ENCODE measurements at regions of chr6 and their contacts with region 1.

Region 1: DNA sequence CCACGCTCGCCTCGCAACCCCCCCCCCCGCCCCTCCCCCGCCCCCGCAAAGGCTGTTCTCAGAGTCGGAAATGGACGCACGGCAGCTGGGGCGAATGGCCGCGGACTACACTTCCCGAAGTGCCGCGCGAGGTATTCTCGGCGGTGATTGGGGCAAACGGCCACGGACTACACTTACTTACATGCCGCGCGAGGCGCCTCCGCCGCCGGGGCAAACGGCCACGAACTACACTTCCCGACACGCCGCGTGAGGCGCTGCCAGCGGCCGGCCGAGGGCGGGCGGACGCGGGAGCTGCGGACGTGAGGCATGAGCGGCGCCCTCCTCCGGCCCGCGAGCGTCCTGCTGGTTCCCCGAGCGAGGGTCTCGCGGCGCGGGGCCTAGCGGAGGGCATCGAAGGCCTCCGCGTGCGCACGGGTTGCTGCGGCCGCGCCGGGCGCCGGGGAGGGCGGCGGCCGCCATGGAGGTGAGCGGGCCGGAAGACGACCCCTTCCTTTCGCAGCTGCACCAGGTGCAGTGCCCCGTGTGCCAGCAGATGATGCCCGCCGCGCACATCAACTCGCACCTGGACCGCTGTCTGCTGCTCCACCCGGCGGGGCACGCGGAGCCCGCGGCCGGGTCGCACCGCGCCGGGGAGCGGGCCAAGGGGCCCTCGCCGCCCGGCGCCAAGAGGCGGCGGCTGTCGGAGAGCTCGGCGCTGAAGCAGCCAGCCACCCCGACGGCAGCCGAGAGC is at the start of gene WRNIP1:
- DNase-seq: peak; percentile 89 to 97 (median 97)
- ATAC-seq: peak; percentile 90
- H3K4me3 ChIP-seq: peak within 1 kb of the TSS; percentile 76
- H3K4me3 Mint-ChIP-seq: peak within 1 kb of the TSS; percentile 86 to 96 (median 94)
- H3K27ac ChIP-seq: peak within 1 kb of the TSS; percentile 88
- H3K27ac Mint-ChIP-seq: peak within 1 kb of the TSS; percentile 89 to 100 (median 99)
- H3K4me1 ChIP-seq: peaks cover 30 to 31% of the 10 kb centered on the region in 2 donors
- H3K4me1 Mint-ChIP-seq: peaks cover 27 to 54% (median 50%) of the 10 kb centered on the region in 7 donors
- H3K27me3 ChIP-seq: no peaks in the 10 kb centered on the region
- H3K27me3 Mint-ChIP-seq: no peaks in the 10 kb centered on the region
- total RNA-seq, gene WRNIP1: 31.2 to 47.6 (median 37.8) TPM

Region 2: DNA sequence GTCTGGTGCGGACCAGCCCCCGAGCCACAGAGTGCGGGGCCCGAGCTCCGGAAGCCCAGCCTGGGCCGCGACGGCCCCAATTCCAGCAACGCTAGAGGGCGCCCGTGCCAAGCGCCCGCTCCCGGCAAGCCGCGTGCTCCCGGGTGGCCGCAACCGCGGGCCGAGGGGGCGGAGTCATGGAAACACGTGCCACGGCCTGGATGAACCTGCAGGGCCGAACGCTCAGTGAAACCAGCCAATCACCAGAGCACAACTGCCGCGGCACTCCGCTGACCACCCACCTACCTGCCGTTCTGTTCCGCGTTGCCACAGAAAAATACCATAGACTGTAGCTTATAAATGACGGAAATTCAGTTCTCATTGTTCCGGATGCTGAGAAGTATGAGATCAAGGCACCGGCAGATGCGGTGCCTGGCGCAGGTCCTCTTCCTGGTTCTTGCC is 1241.3 kb before region 1 on chr6:
- CTCF ChIA-PET with region 1: no interaction called
- POLR2A ChIA-PET with region 1: no interaction called
- intact Hi-C with region 1: loop called in 1 of 2 experiments (anchors 10 kb)
- DNase-seq: peak; percentile 58 to 82 (median 75)
- ATAC-seq: peak; percentile 89
- H3K4me3 ChIP-seq: peak overlapping the region; percentile 60
- H3K4me3 Mint-ChIP-seq: peak overlapping the region; percentile 64 to 87 (median 79)
- H3K27ac ChIP-seq: no peak overlapping the region
- H3K27ac Mint-ChIP-seq: peak overlapping the region; percentile 51 to 93 (median 90)
- H3K4me1 ChIP-seq: peaks cover 19 to 50% of the 10 kb centered on the region in 2 donors
- H3K4me1 Mint-ChIP-seq: peaks cover 35 to 58% (median 48%) of the 10 kb centered on the region in 7 donors
- H3K27me3 ChIP-seq: no peaks in the 10 kb centered on the region
- H3K27me3 Mint-ChIP-seq: peaks cover 0 to 16% (median 4%) of the 10 kb centered on the region in 5 donors

Region 3: DNA sequence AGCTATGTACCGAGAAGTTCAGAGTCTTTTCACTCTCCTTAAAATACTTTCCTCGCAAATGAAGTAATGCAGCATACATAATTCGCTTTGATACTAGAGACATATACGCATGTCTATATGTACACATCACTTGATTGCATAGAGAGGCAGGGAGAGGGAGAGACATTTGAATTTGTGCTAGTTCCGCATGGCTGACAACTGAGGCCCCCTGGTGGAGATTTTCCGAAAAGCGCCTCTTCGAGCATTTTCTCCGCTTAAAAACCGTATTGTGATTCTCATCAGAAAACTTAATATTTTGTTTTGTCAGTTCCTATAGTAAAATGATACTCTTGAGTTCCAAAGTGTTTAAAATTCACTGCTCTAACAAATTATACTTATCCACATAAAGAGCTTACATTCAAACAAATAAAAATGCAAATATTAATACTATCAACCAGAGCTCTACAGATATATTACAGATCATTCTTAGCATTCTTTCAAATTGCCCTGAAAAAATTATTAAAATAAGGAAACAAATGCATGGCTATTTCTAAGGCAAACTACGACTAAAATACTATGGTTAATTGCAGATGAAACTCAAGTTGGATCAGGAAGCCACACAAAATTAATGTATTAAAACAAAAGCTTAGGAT is 15.2 kb before region 1 on chr6:
- CTCF ChIA-PET with region 1: interaction called, 8 read pairs
- POLR2A ChIA-PET with region 1: interaction called, 4 read pairs
- intact Hi-C with region 1: loop called in 1 of 2 experiments (anchors 1 kb)
- DNase-seq: peak; percentile 32 to 71 (median 63)
- ATAC-seq: peak; percentile 86
- H3K4me3 ChIP-seq: no peak overlapping the region
- H3K4me3 Mint-ChIP-seq: no peak overlapping the region
- H3K27ac ChIP-seq: no peak overlapping the region
- H3K27ac Mint-ChIP-seq: no peak overlapping the region
- H3K4me1 ChIP-seq: no peaks in the 10 kb centered on the region
- H3K4me1 Mint-ChIP-seq: peaks cover 0 to 9% (median 3%) of the 10 kb centered on the region in 7 donors
- H3K27me3 ChIP-seq: no peaks in the 10 kb centered on the region
- H3K27me3 Mint-ChIP-seq: peaks cover 13 to 69% (median 19%) of the 10 kb centered on the region in 5 donors

Region 4: GRCh38 chr6:2841264-2842138 is 76.2 kb after region 1 on chr6 and contains the start of gene SERPINB1:
- CTCF ChIA-PET with region 1: no interaction called
- POLR2A ChIA-PET with region 1: interaction called, 21 read pairs
- intact Hi-C with region 1: loop called (anchors 1 to 2 kb)
- DNase-seq: peak; percentile 52 to 88 (median 67)
- ATAC-seq: peak; percentile 89
- H3K4me3 ChIP-seq: peak within 1 kb of the TSS; percentile 69
- H3K4me3 Mint-ChIP-seq: peak within 1 kb of the TSS; percentile 86 to 100 (median 92)
- H3K27ac ChIP-seq: peak within 1 kb of the TSS; percentile 85
- H3K27ac Mint-ChIP-seq: peak within 1 kb of the TSS; percentile 86 to 96 (median 95)
- H3K4me1 ChIP-seq: peaks cover 16 to 29% of the 10 kb centered on the region in 2 donors
- H3K4me1 Mint-ChIP-seq: peaks cover 33 to 68% (median 60%) of the 10 kb centered on the region in 7 donors
- H3K27me3 ChIP-seq: no peaks in the 10 kb centered on the region
- H3K27me3 Mint-ChIP-seq: no peaks in the 10 kb centered on the region
- total RNA-seq, gene SERPINB1: 43.8 to 108 (median 62.5) TPM

Region 5: GRCh38 chr6:2999618-3000557 is 234.6 kb after region 1 on chr6 and contains the start of gene NQO2:
- CTCF ChIA-PET with region 1: no interaction called
- POLR2A ChIA-PET with region 1: no interaction called
- intact Hi-C with region 1: loop called in 1 of 2 experiments (anchors 1 kb)
- DNase-seq: peak; percentile 68 to 92 (median 81)
- ATAC-seq: peak; percentile 91
- H3K4me3 ChIP-seq: peak within 1 kb of the TSS; percentile 95
- H3K4me3 Mint-ChIP-seq: peak within 1 kb of the TSS; percentile 83 to 95 (median 90)
- H3K27ac ChIP-seq: peak within 1 kb of the TSS; percentile 88
- H3K27ac Mint-ChIP-seq: peak within 1 kb of the TSS; percentile 78 to 96 (median 88)
- H3K4me1 ChIP-seq: peaks cover 5 to 18% of the 10 kb centered on the region in 2 donors
- H3K4me1 Mint-ChIP-seq: peaks cover 11 to 35% (median 26%) of the 10 kb centered on the region in 7 donors
- H3K27me3 ChIP-seq: no peaks in the 10 kb centered on the region
- H3K27me3 Mint-ChIP-seq: peaks cover 0 to 5% (median 0%) of the 10 kb centered on the region in 5 donors
- total RNA-seq, gene NQO2: 8.1 to 34.6 (median 22.6) TPM

Region 6: GRCh38 chr6:3162565-3163247 is 397.4 kb after region 1 on chr6:
- CTCF ChIA-PET with region 1: no interaction called
- POLR2A ChIA-PET with region 1: no interaction called
- intact Hi-C with region 1: loop called in 1 of 2 experiments (anchors 1 kb)
- DNase-seq: peak; percentile 29 to 62 (median 51)
- ATAC-seq: peak; percentile 63
- H3K4me3 ChIP-seq: peak overlapping the region; percentile 73
- H3K4me3 Mint-ChIP-seq: peak overlapping the region; percentile 78 to 87 (median 84)
- H3K27ac ChIP-seq: peak overlapping the region; percentile 70
- H3K27ac Mint-ChIP-seq: peak overlapping the region in 8 of 9 donors; percentile 37 to 92 (median 64)
- H3K4me1 ChIP-seq: peaks cover 19 to 22% of the 10 kb centered on the region in 2 donors
- H3K4me1 Mint-ChIP-seq: peaks cover 0 to 40% (median 36%) of the 10 kb centered on the region in 7 donors
- H3K27me3 ChIP-seq: no peaks in the 10 kb centered on the region
- H3K27me3 Mint-ChIP-seq: peaks cover 0 to 68% (median 6%) of the 10 kb centered on the region in 5 donors

Region 7: DNA sequence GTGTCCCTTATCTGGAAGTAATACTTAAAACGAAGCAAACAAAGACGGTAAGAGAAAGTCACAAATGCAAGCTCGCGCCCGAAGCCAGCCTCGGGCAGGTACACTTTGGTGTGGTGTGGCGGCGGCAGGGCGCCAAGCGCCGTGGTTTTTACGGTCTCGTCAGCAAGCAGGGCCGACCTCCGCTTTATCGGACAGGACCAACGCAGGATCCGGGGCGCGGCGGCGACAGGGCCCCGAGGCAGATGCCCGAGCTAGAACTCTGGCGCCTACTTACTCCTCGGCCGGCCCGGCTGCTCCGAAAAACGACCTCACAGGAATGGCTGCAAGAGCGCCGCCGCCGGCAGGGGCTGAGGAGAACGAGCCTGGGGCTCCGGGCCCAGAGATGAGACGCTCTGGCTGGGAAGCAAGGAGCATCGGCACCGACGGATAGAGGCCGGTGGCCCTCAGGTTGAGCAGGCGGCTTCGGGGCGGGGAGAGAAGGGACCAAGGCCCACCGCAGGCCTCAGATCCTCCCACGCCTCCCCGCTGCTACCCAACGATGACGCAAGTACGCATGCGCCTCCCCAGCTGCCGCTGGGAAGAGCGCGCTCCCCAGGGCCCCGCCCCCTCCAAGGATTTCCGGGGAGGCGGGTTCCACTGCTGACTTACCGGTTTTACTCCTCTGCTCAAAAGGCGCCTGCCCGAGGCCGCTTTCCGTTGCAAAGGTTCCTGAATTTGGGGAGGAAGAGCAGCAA is 1253.0 kb after region 1 on chr6:
- CTCF ChIA-PET with region 1: no interaction called
- POLR2A ChIA-PET with region 1: no interaction called
- intact Hi-C with region 1: loop called (anchors 1 to 5 kb)
- DNase-seq: peak; percentile 91 to 98 (median 95)
- ATAC-seq: peak; percentile 83
- H3K4me3 ChIP-seq: peak overlapping the region; percentile 76
- H3K4me3 Mint-ChIP-seq: peak overlapping the region; percentile 86 to 99 (median 94)
- H3K27ac ChIP-seq: peak overlapping the region; percentile 95
- H3K27ac Mint-ChIP-seq: peak overlapping the region; percentile 95 to 100 (median 96)
- H3K4me1 ChIP-seq: peaks cover 27 to 39% of the 10 kb centered on the region in 2 donors
- H3K4me1 Mint-ChIP-seq: peaks cover 45 to 88% (median 70%) of the 10 kb centered on the region in 7 donors
- H3K27me3 ChIP-seq: no peaks in the 10 kb centered on the region
- H3K27me3 Mint-ChIP-seq: no peaks in the 10 kb centered on the region

Measured in naive thymus-derived CD4-positive, alpha-beta T cell (primary cell).